Activated B cell treated with CpG ODN at 0.5 μM for 24 hours (primary cell): ENCODE measurements at regions of chr22 and their contacts with region 1.

Region 1: DNA sequence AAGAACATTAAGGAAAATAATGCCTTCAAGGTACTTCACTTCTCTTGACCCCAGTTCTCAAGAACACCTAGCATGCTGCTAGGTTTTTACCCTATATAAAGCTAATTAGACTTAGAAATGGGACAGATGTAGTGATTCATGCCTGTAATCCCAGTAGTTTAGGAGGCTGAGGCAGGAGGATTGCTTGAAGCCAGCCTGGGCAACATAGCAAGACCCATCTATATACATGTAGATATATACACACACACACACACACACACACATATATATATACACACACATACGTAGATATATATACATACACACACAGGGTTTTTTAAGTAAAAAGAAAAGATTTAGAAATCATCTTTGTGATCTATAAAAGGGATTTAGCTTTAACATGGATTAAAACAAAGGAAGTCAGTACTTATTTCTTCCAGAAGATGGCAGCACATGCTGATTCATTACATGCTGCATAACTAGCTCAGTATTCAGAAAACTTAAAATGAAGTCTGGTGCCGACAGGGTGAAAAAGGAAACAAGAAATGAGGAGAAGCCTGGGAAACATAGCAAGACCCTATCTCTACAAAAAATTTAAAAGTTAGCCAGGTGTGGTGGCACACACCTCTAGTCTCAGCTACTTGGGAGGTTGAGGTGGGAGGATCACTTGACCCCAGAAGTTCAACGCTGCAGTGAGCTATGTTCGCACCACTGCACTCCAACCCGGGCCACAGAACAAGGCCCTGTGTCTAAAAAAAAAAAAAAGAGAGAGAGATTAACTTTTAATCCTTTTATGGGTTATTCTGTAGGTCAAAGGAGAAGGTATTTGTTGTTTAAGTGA is 28.5 kb upstream of the RBX1 start:
- DNase-seq: no peak
- ATAC-seq: peak; percentile 86
- H3K4me3 Mint-ChIP-seq: peak overlapping the region; percentile 15
- H3K27ac Mint-ChIP-seq: peak overlapping the region; percentile 6
- H3K4me1 Mint-ChIP-seq: peaks cover 4% of the 10 kb centered on the region
- H3K27me3 Mint-ChIP-seq: no peaks in the 10 kb centered on the region
- CTCF ChIP-seq: no peak

Region 2: DNA sequence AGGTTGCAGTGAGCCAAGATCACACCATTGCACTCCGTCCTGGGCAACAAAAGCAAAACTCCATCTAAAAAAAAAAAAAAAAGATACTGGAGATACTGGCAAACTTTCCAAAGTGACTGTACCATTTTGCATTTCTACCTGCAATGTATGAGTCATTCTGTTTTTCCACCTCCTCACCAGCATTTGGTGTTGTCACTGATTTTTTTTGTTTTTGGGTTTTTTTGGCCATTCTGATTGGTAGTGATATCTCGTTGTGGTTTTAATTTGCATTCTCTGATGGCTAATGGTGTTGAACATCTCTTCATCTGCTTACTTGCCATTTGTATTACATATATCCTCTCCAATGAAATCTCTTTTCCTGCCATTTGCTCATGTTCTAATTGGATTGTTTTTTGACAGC is 16.5 kb after region 1 on chr22:
- CTCF ChIA-PET with region 1: interaction called, 13 read pairs
- POLR2A ChIA-PET with region 1: interaction called, 4 read pairs
- intact Hi-C with region 1: loop called (anchors 2 kb)
- DNase-seq: no peak
- ATAC-seq: peak; percentile 9
- H3K4me3 Mint-ChIP-seq: peak overlapping the region; percentile 13
- H3K27ac Mint-ChIP-seq: peak overlapping the region; percentile 16
- H3K4me1 Mint-ChIP-seq: peaks cover 40% of the 10 kb centered on the region
- H3K27me3 Mint-ChIP-seq: no peaks in the 10 kb centered on the region
- CTCF ChIP-seq: no peak

Region 3: DNA sequence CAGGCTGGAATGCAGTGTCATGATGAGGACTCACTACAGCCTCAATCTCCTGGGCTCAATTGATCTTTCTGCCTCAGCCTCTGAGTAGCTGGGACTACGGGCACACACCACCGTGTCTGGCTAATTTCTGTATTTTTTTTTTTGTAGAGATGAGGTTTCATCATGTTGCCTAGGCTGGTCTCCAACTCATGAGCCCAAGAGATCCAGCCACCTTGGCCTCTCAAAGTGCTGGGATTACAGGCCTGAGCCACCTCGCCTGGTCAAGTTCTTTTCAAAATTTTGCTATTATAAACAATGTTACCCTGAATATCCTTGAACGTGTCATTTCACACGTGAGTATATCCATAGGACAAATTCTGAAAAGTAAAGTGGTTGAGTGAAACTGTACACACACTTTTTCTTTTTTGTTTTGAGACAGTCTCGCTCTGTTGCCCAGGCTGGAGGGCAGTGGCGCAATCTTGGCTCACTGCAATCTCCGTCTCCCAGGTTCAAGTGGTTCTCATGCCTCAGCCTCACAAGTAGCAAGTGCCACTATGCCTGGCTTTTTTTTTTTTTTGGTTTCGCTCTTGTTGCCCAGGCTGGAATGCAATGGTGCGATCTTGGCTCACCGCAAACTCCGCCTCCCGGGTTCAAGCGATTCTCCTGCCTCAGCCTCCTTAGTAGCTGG is 148.1 kb after region 1 on chr22:
- CTCF ChIA-PET with region 1: interaction called, 22 read pairs
- POLR2A ChIA-PET with region 1: interaction called, 9 read pairs
- intact Hi-C with region 1: loop called (anchors 1 kb)
- DNase-seq: no peak
- ATAC-seq: no peak
- H3K4me3 Mint-ChIP-seq: no peak overlapping the region
- H3K27ac Mint-ChIP-seq: no peak overlapping the region
- H3K4me1 Mint-ChIP-seq: peaks cover 33% of the 10 kb centered on the region
- H3K27me3 Mint-ChIP-seq: no peaks in the 10 kb centered on the region
- CTCF ChIP-seq: no peak

Region 4: GRCh38 chr22:41127451-41127850 is 204.8 kb after region 1 on chr22:
- CTCF ChIA-PET with region 1: interaction called, 12 read pairs
- POLR2A ChIA-PET with region 1: no interaction called
- intact Hi-C with region 1: loop called (anchors 5 kb)
- DNase-seq: no peak
- ATAC-seq: no peak
- H3K4me3 Mint-ChIP-seq: no peak overlapping the region
- H3K27ac Mint-ChIP-seq: no peak overlapping the region
- H3K4me1 Mint-ChIP-seq: peaks cover 13% of the 10 kb centered on the region
- H3K27me3 Mint-ChIP-seq: no peaks in the 10 kb centered on the region
- CTCF ChIP-seq: no peak

Region 5: DNA sequence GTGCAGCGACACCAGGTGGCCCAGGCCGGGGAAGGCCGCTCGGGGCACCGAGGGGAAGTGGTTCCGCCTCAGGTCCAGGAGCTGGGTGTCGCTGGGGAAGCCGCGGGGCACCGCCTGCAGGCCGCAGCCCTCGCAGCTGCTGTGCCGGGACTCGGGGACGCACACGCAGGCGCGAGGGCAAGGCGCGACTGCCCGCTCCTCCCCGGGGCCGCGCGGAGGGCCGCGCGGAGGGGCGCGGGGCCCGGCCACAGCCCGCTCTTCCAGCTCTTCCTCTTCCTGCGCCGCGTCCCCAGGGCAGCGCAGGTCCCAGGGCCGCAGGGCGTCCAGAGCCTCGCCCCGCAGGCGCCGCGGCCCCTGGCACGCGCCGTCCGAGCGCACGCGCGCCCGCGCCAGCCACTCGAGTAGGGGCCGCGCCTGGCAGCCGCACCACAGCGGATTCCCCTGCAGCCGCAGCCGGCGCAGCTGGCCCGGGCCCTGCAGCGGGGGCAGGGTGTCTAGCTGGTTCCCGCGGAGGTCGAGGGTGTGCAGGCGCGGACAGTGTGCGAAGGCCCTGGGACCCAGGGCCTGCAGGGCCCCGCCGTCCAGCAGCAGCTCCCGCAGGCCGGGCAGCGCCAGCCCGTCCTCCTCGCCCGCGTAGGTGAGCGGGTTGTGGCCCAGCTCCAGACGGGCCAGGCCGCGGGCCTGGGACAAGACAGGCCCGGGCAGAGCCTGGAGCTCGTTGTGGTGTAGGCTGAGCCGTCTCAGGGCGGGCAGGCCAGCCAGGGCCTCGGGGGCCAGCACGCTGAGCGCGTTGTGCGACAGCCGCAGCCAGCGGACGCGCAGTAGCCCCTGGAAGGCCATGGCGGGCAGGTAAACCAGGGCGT is 315.2 kb after region 1 on chr22:
- CTCF ChIA-PET with region 1: interaction called, 83 read pairs
- POLR2A ChIA-PET with region 1: interaction called, 16 read pairs
- intact Hi-C with region 1: loop called (anchors 1 kb)
- DNase-seq: peak; percentile 78
- ATAC-seq: peak; percentile 97
- H3K4me3 Mint-ChIP-seq: peak overlapping the region; percentile 64
- H3K27ac Mint-ChIP-seq: no peak overlapping the region
- H3K4me1 Mint-ChIP-seq: peaks cover 8% of the 10 kb centered on the region
- H3K27me3 Mint-ChIP-seq: no peaks in the 10 kb centered on the region
- CTCF ChIP-seq: no peak